Naive thymus-derived CD4-positive, alpha-beta T cell (primary cell): ENCODE measurements at regions of chr2 and their contacts with region 1.

Region 1: GRCh38 chr2:101831351-101831865 is 133.9 kb downstream of the MAP4K4 start:
- DNase-seq: peak; percentile 17 to 68 (median 62)
- ATAC-seq: peak; percentile 76
- H3K4me3 ChIP-seq: no peak overlapping the region
- H3K4me3 Mint-ChIP-seq: peak overlapping the region in 8 of 10 donors; percentile 12 to 77 (median 60)
- H3K27ac ChIP-seq: no peak overlapping the region
- H3K27ac Mint-ChIP-seq: peak overlapping the region in 8 of 9 donors; percentile 7 to 88 (median 72)
- H3K4me1 ChIP-seq: peaks cover 13 to 44% of the 10 kb centered on the region in 2 donors
- H3K4me1 Mint-ChIP-seq: peaks cover 45 to 56% (median 54%) of the 10 kb centered on the region in 7 donors
- H3K27me3 ChIP-seq: no peaks in the 10 kb centered on the region
- H3K27me3 Mint-ChIP-seq: no peaks in the 10 kb centered on the region

Region 2: DNA sequence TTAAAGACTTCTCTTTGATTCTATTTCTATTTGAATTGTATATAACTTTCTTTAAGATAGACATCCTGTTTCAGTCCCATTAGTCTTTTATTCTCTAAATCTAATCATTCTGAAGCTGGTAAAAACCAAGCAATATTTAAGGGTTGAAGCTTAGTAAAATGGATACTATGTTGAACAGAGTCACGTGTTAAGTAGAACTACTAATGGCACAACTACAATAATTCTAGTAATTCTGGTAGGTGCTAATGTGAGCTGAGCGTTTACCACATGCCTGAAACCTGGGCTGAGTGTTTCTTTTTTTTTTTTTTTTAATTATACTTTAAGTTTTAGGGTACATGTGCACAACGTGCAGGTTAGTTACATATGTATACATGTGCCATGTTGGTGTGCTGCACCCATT is 1680.1 kb before region 1 on chr2:
- CTCF ChIA-PET with region 1: no interaction called
- POLR2A ChIA-PET with region 1: no interaction called
- intact Hi-C with region 1: no loop called
- DNase-seq: no peak
- ATAC-seq: no peak
- H3K4me3 ChIP-seq: no peak overlapping the region
- H3K4me3 Mint-ChIP-seq: no peak overlapping the region
- H3K27ac ChIP-seq: no peak overlapping the region
- H3K27ac Mint-ChIP-seq: no peak overlapping the region
- H3K4me1 ChIP-seq: no peaks in the 10 kb centered on the region
- H3K4me1 Mint-ChIP-seq: peaks cover 0 to 3% (median 0%) of the 10 kb centered on the region in 7 donors
- H3K27me3 ChIP-seq: no peaks in the 10 kb centered on the region
- H3K27me3 Mint-ChIP-seq: peaks cover 0 to 20% (median 0%) of the 10 kb centered on the region in 5 donors

Region 3: GRCh38 chr2:101012706-101013181 is 818.7 kb before region 1 on chr2:
- CTCF ChIA-PET with region 1: no interaction called
- POLR2A ChIA-PET with region 1: no interaction called
- intact Hi-C with region 1: loop called in 1 of 2 experiments (anchors 10 kb)
- DNase-seq: peak in 7 of 9 donors; percentile 16 to 51 (median 38)
- ATAC-seq: no peak
- H3K4me3 ChIP-seq: no peak overlapping the region
- H3K4me3 Mint-ChIP-seq: no peak overlapping the region
- H3K27ac ChIP-seq: no peak overlapping the region
- H3K27ac Mint-ChIP-seq: no peak overlapping the region
- H3K4me1 ChIP-seq: no peaks in the 10 kb centered on the region
- H3K4me1 Mint-ChIP-seq: peaks cover 6 to 28% (median 12%) of the 10 kb centered on the region in 7 donors
- H3K27me3 ChIP-seq: no peaks in the 10 kb centered on the region
- H3K27me3 Mint-ChIP-seq: no peaks in the 10 kb centered on the region

Region 4: DNA sequence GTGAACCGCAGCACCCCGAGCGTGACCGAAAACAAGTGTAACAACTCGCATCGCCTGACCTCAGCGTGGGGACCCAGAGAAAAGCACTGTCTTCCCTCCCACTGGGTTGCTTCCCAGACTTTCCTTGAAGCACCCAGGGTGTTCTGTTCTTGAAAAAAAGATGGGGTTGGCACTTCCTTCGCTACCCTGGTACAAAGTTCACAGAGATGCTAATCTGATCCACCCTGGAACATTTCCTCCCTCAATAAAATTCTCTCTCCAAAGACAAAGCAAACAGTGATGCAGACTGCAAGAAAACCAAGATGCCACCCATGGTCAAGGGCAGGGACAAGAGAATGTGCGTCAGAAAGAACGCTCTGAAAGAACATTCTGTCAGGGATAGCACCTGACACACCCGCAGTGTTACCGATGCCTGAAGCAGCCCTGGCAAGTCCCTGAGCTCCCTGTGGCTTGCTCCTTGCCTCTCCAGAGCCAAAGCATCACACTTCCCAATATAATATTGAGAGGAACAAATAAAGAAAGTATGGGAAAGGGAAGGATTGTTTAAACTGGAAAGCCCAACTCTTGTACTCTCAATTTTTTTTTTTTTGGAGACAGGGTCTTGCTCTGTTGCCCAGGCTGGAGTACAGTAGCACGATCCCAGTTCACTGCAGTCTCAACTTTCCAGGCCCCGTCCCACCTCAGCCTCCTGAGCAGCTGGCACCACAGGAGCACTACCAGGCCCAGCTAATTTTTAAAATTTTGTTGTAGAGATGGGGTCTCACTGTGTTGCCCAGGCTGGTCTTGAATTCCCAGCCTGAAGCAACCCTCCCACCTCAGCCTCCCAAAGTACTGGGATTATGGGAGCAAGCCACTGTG is 751.0 kb before region 1 on chr2:
- CTCF ChIA-PET with region 1: no interaction called
- POLR2A ChIA-PET with region 1: no interaction called
- intact Hi-C with region 1: no loop called
- DNase-seq: no peak
- ATAC-seq: no peak
- H3K4me3 ChIP-seq: no peak overlapping the region
- H3K4me3 Mint-ChIP-seq: no peak overlapping the region
- H3K27ac ChIP-seq: no peak overlapping the region
- H3K27ac Mint-ChIP-seq: no peak overlapping the region
- H3K4me1 ChIP-seq: no peaks in the 10 kb centered on the region
- H3K4me1 Mint-ChIP-seq: no peaks in the 10 kb centered on the region
- H3K27me3 ChIP-seq: no peaks in the 10 kb centered on the region
- H3K27me3 Mint-ChIP-seq: peaks cover 0 to 2% (median 0%) of the 10 kb centered on the region in 5 donors

Region 5: GRCh38 chr2:101341901-101342624 is 489.3 kb before region 1 on chr2:
- CTCF ChIA-PET with region 1: interaction called, 8 read pairs
- POLR2A ChIA-PET with region 1: no interaction called
- intact Hi-C with region 1: loop called (anchors 1 kb)
- DNase-seq: peak; percentile 32 to 73 (median 51)
- ATAC-seq: peak; percentile 76
- H3K4me3 ChIP-seq: no peak overlapping the region
- H3K4me3 Mint-ChIP-seq: peak overlapping the region in 4 of 10 donors; percentile 10 to 63 (median 18)
- H3K27ac ChIP-seq: no peak overlapping the region
- H3K27ac Mint-ChIP-seq: peak overlapping the region in 5 of 9 donors; percentile 9 to 68 (median 31)
- H3K4me1 ChIP-seq: peaks cover 6 to 21% of the 10 kb centered on the region in 2 donors
- H3K4me1 Mint-ChIP-seq: peaks cover 24 to 43% (median 32%) of the 10 kb centered on the region in 7 donors
- H3K27me3 ChIP-seq: no peaks in the 10 kb centered on the region
- H3K27me3 Mint-ChIP-seq: peaks cover 0 to 20% (median 0%) of the 10 kb centered on the region in 5 donors

Region 6: DNA sequence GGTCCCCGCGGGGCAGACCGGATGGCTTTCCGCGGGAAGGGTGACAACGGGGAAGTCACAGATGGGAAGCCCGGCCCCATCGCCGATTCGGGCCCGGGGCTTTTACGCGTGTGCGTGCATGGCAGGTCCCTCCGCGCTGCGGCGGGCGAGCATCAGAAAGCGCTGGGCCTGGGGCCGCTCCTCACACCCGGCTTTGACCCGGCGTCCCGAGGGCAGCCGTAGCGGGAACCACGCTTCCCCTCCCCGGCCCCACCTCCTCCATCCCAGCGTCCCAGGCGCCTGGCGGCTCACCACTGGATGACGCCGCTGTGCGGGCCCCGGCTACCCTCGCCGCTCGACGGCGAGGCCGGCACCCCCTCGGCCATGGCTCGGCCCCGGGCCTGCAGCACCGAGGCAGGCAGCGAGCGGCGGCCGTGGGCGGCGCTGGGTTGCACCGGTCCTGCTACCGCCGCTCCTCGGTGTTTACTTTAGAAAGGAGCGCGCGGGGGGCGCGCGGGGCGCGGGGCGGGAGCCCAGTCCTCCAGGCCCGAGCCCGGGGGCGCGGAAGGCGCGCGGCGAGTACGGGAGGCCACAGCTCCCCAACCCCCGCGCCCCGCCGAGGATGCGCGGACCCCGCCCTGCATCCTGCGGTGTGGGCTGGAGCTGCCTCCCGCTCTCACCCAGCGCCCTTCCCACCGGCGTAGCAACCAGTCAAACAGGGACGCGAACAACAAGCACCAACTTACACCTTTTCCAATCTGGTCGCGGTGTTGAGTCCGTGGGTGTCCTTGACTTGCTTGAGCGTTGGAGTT is 357.3 kb before region 1 on chr2:
- CTCF ChIA-PET with region 1: no interaction called
- POLR2A ChIA-PET with region 1: no interaction called
- intact Hi-C with region 1: loop called in 1 of 2 experiments (anchors 2 kb)
- DNase-seq: peak; percentile 7 to 70 (median 20)
- ATAC-seq: peak; percentile 46
- H3K4me3 ChIP-seq: peak overlapping the region; percentile 48
- H3K4me3 Mint-ChIP-seq: peak overlapping the region; percentile 81 to 90 (median 85)
- H3K27ac ChIP-seq: no peak overlapping the region
- H3K27ac Mint-ChIP-seq: peak overlapping the region in 5 of 9 donors; percentile 36 to 92 (median 73)
- H3K4me1 ChIP-seq: peaks cover 0 to 6% of the 10 kb centered on the region in 2 donors
- H3K4me1 Mint-ChIP-seq: peaks cover 6 to 50% (median 11%) of the 10 kb centered on the region in 7 donors
- H3K27me3 ChIP-seq: no peaks in the 10 kb centered on the region
- H3K27me3 Mint-ChIP-seq: peaks cover 0 to 7% (median 0%) of the 10 kb centered on the region in 5 donors

Region 7: DNA sequence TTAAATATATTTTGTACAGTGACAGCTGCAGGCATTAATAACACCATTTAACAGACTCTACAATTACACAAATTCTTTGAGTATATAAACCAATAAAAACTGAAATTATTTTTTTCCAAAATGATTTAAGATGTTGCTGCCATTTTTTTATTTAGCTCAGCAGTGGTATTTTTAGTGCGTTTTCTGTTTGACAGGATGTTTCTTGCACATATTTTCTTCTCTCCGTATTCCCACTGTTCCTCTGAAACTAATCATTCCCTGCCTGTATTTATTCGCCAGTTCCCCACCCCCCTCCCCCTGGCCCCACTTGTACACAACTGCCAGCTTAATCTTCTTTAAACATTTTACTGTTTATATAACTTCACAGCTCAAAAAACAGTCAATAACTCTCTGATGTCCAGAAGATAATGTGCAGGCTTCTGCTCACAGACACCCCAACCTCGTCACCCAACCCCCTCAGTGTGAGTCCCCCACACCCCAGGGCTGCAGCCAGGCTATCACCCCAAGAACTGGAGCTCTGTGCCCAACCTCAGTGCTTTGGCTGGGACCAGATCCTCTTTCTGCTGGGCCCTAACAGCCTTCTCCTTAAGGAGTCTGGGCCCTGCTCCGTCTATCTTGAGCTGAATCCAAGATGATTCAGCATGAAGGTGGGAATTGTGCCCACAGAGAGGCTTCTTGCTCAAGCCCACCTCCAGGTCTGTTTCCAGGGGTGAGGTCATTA is 175.5 kb before region 1 on chr2:
- CTCF ChIA-PET with region 1: no interaction called
- POLR2A ChIA-PET with region 1: no interaction called
- intact Hi-C with region 1: loop called (anchors 2 to 5 kb)
- DNase-seq: no peak
- ATAC-seq: no peak
- H3K4me3 ChIP-seq: no peak overlapping the region
- H3K4me3 Mint-ChIP-seq: no peak overlapping the region
- H3K27ac ChIP-seq: no peak overlapping the region
- H3K27ac Mint-ChIP-seq: no peak overlapping the region
- H3K4me1 ChIP-seq: peaks cover 5 to 10% of the 10 kb centered on the region in 2 donors
- H3K4me1 Mint-ChIP-seq: peaks cover 11 to 25% (median 16%) of the 10 kb centered on the region in 7 donors
- H3K27me3 ChIP-seq: no peaks in the 10 kb centered on the region
- H3K27me3 Mint-ChIP-seq: no peaks in the 10 kb centered on the region